ENCODE measurements at regions of chr4 and their contacts with region 1.

Region 1: GRCh38 chr4:145609481-145610427 is 9.4 kb upstream of the MMAA start:
- DNase-seq: peak; percentile 82
- ATAC-seq: peak; percentile 76
- H3K4me3 Mint-ChIP-seq: no peak overlapping the region
- H3K27ac Mint-ChIP-seq: no peak overlapping the region
- H3K4me1 Mint-ChIP-seq: peaks cover 13% of the 10 kb centered on the region
- H3K27me3 Mint-ChIP-seq: peaks cover 2% of the 10 kb centered on the region

Region 2: GRCh38 chr4:144634978-144635747 is 974.6 kb before region 1 on chr4:
- CTCF ChIA-PET with region 1: no interaction called
- POLR2A ChIA-PET with region 1: no interaction called
- intact Hi-C with region 1: no loop called
- DNase-seq: no peak
- ATAC-seq: no peak
- H3K4me3 Mint-ChIP-seq: no peak overlapping the region
- H3K27ac Mint-ChIP-seq: no peak overlapping the region
- H3K4me1 Mint-ChIP-seq: no peaks in the 10 kb centered on the region
- H3K27me3 Mint-ChIP-seq: peaks cover 10% of the 10 kb centered on the region

Region 3: GRCh38 chr4:145216535-145216934 is 393.2 kb before region 1 on chr4:
- CTCF ChIA-PET with region 1: interaction called, 5 read pairs
- POLR2A ChIA-PET with region 1: no interaction called
- intact Hi-C with region 1: loop called in 1 of 2 experiments (anchors 5 kb)
- DNase-seq: no peak
- ATAC-seq: no peak
- H3K4me3 Mint-ChIP-seq: no peak overlapping the region
- H3K27ac Mint-ChIP-seq: no peak overlapping the region
- H3K4me1 Mint-ChIP-seq: no peaks in the 10 kb centered on the region
- H3K27me3 Mint-ChIP-seq: no peaks in the 10 kb centered on the region

Region 4: GRCh38 chr4:145234091-145234706 is 375.6 kb before region 1 on chr4:
- CTCF ChIA-PET with region 1: interaction called, 36 read pairs
- POLR2A ChIA-PET with region 1: interaction called, 4 read pairs
- intact Hi-C with region 1: loop called (anchors 1 kb)
- DNase-seq: peak; percentile 78
- ATAC-seq: peak; percentile 98
- H3K4me3 Mint-ChIP-seq: no peak overlapping the region
- H3K27ac Mint-ChIP-seq: no peak overlapping the region
- H3K4me1 Mint-ChIP-seq: no peaks in the 10 kb centered on the region
- H3K27me3 Mint-ChIP-seq: no peaks in the 10 kb centered on the region

Measured in activated CD4-positive, alpha-beta T cell treated with anti-CD3 and anti-CD28 coated beads for 36 hours (primary cell).